ENCODE measurements at regions of chr17 and their contacts with region 1.

Region 1: GRCh38 chr17:77842528-77843147 is 115.9 kb upstream of the TNRC6C start:
- DNase-seq: no peak
- H3K4me3 Mint-ChIP-seq: no peak overlapping the region
- H3K27ac Mint-ChIP-seq: peak overlapping the region; percentile 28
- H3K4me1 Mint-ChIP-seq: peaks cover 43% of the 10 kb centered on the region
- H3K27me3 Mint-ChIP-seq: peaks cover 12% of the 10 kb centered on the region

Region 2: DNA sequence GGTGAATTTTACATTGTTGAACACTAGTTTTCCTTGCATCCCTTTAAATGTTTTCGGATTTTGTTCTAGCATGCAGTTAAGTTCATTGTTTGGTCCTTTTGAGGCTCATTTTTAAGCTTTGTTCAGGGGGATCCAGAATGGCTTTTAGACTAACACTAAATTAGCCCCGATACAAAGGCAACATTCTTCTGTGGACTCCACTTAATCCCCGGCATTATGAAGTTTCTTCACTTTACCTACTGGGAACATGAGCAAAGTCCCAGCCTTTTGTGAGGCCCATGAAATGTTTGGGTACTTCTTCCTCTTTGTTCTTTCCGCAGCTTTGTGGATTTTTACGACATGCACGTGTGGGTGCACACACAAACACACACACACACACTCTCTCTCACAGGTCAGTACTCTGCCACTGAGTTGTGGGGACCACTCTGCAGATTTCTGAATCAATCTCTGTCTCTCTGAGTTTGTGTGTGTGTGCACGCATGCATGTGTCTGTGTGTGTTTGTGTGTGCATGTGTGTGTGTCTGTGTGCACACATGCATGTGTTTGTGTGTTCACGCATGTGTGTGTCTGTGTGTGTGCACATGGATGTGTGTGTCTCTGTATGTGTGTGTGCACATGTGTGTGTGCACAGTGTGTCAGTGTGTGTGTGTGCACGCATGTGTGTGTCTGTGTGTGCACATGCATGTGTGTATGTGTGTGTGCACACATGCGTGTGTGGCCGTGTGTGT is 124.5 kb before region 1 on chr17:
- CTCF ChIA-PET with region 1: no interaction called
- POLR2A ChIA-PET with region 1: no interaction called
- DNase-seq: peak; percentile 8
- H3K4me3 Mint-ChIP-seq: no peak overlapping the region
- H3K27ac Mint-ChIP-seq: no peak overlapping the region
- H3K4me1 Mint-ChIP-seq: no peaks in the 10 kb centered on the region
- H3K27me3 Mint-ChIP-seq: peaks cover 28% of the 10 kb centered on the region

Region 3: DNA sequence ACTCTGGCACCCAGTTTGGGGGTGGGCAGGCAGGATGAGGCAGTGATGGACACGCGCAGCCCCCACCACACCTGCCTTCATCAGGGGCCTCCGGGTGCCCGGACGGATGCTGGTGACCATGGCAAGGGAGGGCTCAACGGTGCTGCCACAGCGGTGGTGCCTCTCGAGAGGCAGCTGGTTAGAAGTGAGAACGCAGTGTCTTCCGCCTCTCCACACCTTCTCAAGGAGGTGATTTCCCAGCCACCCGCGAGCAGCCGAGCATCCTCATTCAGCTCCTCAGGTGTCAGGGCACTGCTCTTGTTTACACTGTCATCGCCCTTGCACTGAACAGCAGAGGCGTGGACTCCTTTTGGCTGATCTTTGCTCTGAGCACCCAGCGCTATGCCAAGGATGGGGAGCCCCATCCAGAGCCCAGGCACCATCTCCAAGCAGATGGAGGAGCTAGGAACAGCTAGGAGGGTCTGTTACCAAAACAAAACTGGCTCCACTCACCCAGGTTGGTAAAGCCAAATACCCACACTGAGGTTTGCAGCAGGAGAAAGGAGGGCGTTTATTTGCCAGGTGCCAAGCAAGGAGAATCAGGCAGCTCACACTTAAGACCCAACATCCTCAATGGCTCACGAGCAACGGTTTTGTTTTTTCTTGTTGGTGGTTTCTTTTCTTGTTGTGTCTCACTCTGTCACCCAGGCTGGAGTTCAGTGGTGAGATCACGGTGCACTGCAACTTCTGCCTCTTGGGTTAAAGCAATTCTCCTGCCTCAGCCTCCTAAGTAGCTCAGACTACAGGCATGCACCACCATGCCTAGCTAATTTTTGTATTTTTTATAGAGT is 58.4 kb before region 1 on chr17:
- CTCF ChIA-PET with region 1: no interaction called
- POLR2A ChIA-PET with region 1: interaction called, 12 read pairs
- DNase-seq: peak; percentile 71
- H3K4me3 Mint-ChIP-seq: no peak overlapping the region
- H3K27ac Mint-ChIP-seq: peak overlapping the region; percentile 74
- H3K4me1 Mint-ChIP-seq: peaks cover 25% of the 10 kb centered on the region
- H3K27me3 Mint-ChIP-seq: peaks cover 3% of the 10 kb centered on the region

Region 4: GRCh38 chr17:77881545-77881944 is 38.9 kb after region 1 on chr17:
- CTCF ChIA-PET with region 1: interaction called, 8 read pairs
- POLR2A ChIA-PET with region 1: interaction called, 22 read pairs
- DNase-seq: peak; percentile 89
- H3K4me3 Mint-ChIP-seq: peak overlapping the region; percentile 70
- H3K27ac Mint-ChIP-seq: peak overlapping the region; percentile 88
- H3K4me1 Mint-ChIP-seq: peaks cover 50% of the 10 kb centered on the region
- H3K27me3 Mint-ChIP-seq: peaks cover 9% of the 10 kb centered on the region